GM10248 (cell line): ENCODE measurements at regions of chr1 and their contacts with region 1.

Region 1: GRCh38 chr1:26833432-26834405 is 7.2 kb downstream of the ZDHHC18 start:
- DNase-seq: peak; percentile 91
- CTCF ChIP-seq: peak; percentile 47

Region 2: DNA sequence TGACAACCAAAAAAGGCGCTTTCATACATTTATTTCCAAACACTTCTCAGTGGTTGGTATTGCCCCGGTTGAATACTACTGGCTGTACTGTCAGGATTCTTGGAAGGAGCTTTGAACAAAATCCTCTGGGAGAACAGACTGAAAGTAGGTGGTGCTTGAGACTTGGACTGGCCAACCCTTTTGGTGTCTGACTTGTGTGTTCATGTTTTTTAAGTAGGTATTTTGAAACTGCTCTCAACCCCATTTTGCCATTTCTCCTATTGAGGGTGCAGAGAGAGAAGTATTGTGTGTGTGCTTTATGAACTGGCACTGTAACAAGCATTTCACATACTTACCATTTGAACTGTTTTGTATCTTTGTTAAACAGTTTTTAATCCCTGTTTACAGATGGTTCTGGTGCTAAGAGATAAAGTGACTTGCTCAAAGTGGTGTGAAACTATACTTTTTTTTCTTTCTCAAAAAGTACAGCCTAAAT is 116.7 kb before region 1 on chr1:
- CTCF ChIA-PET with region 1: no interaction called
- POLR2A ChIA-PET with region 1: no interaction called
- DNase-seq: no peak
- CTCF ChIP-seq: no peak

Region 3: GRCh38 chr1:26799479-26800142 is 34.1 kb before region 1 on chr1:
- CTCF ChIA-PET with region 1: interaction called, 10 read pairs
- POLR2A ChIA-PET with region 1: interaction called, 3 read pairs
- DNase-seq: no peak
- CTCF ChIP-seq: no peak

Region 4: GRCh38 chr1:26820784-26821269 is 12.9 kb before region 1 on chr1:
- CTCF ChIA-PET with region 1: interaction called, 33 read pairs
- POLR2A ChIA-PET with region 1: no interaction called
- DNase-seq: peak; percentile 80
- CTCF ChIP-seq: peak; percentile 52

Region 5: DNA sequence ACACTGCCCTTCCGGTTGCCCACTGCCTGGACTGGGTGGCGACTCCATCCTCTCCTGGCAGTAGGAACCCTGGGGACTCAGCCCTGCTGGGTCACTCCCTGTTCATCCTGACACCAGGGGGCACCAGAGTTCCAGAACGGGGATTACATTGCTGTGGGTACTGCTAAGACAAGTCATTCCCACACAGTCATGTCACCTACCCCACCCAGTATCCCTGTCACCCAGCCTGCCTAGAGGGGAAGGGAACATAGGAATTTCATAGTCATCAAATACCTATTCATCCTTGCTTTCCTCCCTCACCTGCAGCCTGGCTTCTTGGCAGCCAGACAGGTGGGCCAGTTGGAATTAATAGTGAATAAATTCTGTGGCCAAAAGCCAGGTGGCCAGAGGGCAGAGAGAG is 19.4 kb after region 1 on chr1:
- CTCF ChIA-PET with region 1: interaction called, 18 read pairs
- POLR2A ChIA-PET with region 1: interaction called, 4 read pairs
- DNase-seq: peak; percentile 82
- CTCF ChIP-seq: peak; percentile 70